Dendritic cell treated with granulocyte-macrophage colony-stimulating factor and Interleukin-4, amounts not matched to agents 40 ng/mL and 50 ng/mL, for 4 days (primary cell): ENCODE measurements at regions of chr17 and their contacts with region 1.

Region 1: GRCh38 chr17:77887464-77888241 is 70.8 kb upstream of the TNRC6C start:
- H3K4me3 Mint-ChIP-seq: peak overlapping the region; percentile 66
- H3K27ac Mint-ChIP-seq: peak overlapping the region; percentile 73
- H3K4me1 Mint-ChIP-seq: peaks cover 57% of the 10 kb centered on the region
- H3K27me3 Mint-ChIP-seq: peaks cover 93% of the 10 kb centered on the region

Region 2: DNA sequence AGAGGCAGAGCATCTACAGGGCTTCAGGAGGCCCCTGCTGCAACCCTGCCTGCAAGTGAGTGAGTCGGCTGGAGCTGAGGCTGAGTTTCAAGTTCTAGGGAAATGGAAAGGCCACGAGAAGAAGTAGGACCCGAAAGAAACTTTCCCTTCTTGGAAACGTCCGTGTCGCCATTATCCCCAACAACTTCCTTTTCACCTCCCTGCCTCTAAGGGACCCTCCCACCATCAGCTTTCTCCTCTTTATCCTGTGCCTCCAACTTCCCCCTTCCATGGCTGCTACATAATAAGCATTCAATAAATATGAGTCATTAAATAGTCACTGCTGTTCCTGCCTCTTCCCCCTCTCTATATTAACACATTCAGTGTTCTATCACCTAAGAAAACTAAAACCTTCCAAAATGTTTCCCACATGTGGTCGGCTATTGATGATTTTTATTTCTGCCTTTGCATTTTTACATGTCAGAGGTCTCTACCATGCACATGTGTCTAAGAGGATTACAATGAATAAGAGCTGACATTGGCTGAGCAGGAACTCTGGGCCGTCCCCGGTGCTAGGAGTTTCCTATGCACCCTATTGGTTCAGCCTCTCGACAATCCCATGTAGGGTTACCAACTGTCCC is 45.0 kb before region 1 on chr17:
- intact Hi-C with region 1: loop called (anchors 5 kb)
- H3K4me3 Mint-ChIP-seq: peak overlapping the region; percentile 20
- H3K27ac Mint-ChIP-seq: no peak overlapping the region
- H3K4me1 Mint-ChIP-seq: peaks cover 52% of the 10 kb centered on the region
- H3K27me3 Mint-ChIP-seq: peaks cover 45% of the 10 kb centered on the region